ENCODE measurements at regions of chr7 and their contacts with region 1.

Region 1: DNA sequence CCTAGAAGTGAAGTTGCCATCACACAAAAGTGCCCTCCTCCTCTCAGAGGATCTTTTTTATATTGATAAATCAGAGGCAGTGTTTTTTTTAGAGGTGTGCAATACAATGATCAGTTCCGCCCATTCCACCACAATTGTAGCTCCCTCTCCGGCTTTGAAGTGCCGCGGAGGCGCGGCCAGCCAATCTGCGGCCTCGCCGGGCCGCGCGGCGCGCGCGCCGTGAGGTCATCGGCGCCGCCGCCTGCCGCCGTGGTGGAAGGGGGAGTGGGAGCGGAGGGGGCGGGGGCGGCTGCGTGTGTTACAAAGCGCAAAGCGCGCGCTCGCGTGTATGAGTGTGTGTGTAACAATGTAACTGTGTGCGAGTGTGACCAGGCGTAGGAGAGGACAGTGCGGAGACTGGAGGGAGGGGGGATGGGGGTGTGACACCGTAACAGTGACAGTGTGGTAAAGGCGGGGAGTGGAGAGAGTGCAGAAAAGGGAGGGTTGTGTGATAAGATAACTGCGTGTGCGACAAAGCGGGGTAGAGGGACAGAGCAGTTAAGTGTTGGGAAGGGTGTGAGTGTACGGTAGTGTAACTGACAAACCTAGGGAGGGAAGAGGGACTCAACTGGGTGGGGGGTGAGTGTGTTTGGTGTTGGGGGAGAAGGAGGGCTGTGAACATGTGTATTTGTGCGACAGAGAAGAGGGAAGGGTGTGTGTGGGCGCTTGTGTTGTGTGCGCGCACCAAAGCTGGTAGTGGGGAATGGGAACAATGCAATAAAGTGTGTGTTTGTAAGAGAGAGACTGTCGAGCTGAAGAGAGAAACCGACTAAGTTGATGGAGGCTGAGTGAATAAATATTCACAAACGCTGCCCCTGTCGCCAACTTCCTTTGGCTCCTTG is at the start of gene SP8:
- DNase-seq: no peak
- ATAC-seq: no peak
- H3K4me3 ChIP-seq: peak within 1 kb of the TSS; percentile 24 to 47
- H3K27ac ChIP-seq: no peak within 1 kb of the TSS
- H3K4me1 ChIP-seq: no peaks in the 10 kb centered on the region
- H3K27me3 ChIP-seq: peaks cover 52% of the 10 kb centered on the region
- CTCF ChIP-seq: no peak
- total RNA-seq, gene SP8: not detected

Region 2: GRCh38 chr7:20798081-20798693 is 11.2 kb after region 1 on chr7:
- CTCF ChIA-PET with region 1: no interaction called
- POLR2A ChIA-PET with region 1: interaction called, 11 read pairs
- in situ Hi-C with region 1: no loop called
- intact Hi-C with region 1: no loop called
- DNase-seq: no peak
- ATAC-seq: peak; percentile 96
- H3K4me3 ChIP-seq: peak overlapping the region; percentile 48 to 80
- H3K27ac ChIP-seq: no peak overlapping the region
- H3K4me1 ChIP-seq: no peaks in the 10 kb centered on the region; the same call in 1 of the 2 replicates
- H3K27me3 ChIP-seq: peaks cover 36% of the 10 kb centered on the region
- CTCF ChIP-seq: no peak

Region 3: GRCh38 chr7:21639206-21639856 is 852.3 kb after region 1 on chr7:
- CTCF ChIA-PET with region 1: interaction called, 13 read pairs
- POLR2A ChIA-PET with region 1: no interaction called
- in situ Hi-C with region 1: no loop called
- intact Hi-C with region 1: no loop called
- DNase-seq: no peak
- ATAC-seq: no peak
- H3K4me3 ChIP-seq: no peak overlapping the region
- H3K27ac ChIP-seq: no peak overlapping the region
- H3K4me1 ChIP-seq: no peaks in the 10 kb centered on the region
- H3K27me3 ChIP-seq: peaks cover 3% of the 10 kb centered on the region; the same call in 1 of the 2 replicates
- CTCF ChIP-seq: no peak